ENCODE measurements at regions of chr13 and their contacts with region 1.

Region 1: GRCh38 chr13:39777527-39778061 is 122.1 kb downstream of the COG6 start:
- DNase-seq: no peak
- ATAC-seq: peak; percentile 63

Region 2: DNA sequence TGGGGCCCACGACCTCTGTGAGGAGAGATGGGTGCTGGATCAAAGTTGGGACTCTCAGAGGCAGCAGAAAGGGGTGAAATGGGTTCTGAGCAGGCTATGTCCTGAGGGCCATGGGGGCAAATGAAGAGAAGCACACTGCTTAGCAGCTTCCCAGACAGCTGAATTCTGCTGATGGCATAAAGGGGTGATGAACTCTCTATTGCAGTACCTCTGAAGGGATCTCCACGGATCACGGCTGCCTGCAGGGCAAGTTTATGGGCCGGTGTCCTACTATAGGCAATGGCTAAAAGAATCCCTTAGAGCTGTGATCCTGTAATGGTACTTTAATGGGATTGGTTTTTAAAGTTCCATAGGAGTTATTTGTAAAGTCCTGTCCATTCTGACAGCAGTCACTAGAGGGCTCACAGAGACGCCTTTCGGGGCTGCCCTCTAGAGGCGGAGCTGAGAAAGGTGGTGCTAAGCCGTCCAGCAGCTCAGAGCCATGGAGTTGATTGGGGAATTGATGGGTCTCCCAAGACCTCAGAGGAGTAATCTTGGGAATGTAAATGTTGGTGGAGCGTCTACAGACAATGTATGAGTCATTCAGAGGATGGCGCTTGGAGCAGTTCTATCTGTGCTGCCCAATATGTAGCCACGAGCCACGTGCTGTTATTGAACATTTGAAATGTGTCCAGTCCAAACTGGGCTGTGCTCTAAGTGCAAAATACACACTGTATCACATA is 165.1 kb after region 1 on chr13:
- intact Hi-C with region 1: loop called (anchors 10 kb)
- DNase-seq: peak; percentile 73
- ATAC-seq: peak; percentile 96

Region 3: DNA sequence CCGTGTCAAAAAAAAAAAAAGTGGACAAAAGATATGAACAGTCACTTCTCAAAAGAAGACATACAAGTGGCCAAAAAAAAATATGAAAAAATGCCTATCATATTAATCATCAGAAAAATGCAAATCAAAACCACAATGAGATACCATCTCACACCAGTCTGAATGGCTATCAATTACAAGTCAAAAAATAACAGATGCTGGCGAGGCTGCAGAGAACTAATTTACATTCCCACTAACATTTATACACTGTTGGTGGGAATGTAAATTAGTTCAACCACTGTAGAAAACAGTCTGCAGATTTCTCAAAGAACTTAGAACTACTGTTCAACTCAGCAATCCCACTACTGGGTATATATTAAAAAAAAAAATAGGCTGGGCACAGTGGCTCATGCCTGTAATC is 915.4 kb after region 1 on chr13:
- intact Hi-C with region 1: loop called (anchors 10 kb)
- DNase-seq: no peak
- ATAC-seq: no peak

Region 4: GRCh38 chr13:40974460-40975407 is 1197.1 kb after region 1 on chr13:
- intact Hi-C with region 1: no loop called
- DNase-seq: no peak
- ATAC-seq: peak; percentile 77

Measured in left ventricle myocardium superior (tissue), 1 donor.